ENCODE measurements at regions of chr14 and their contacts with region 1.

Region 1: GRCh38 chr14:99718031-99718810 is 34.1 kb downstream of the CYP46A1 start:
- DNase-seq: no peak
- H3K4me3 ChIP-seq: no peak overlapping the region
- H3K27ac ChIP-seq: no peak overlapping the region
- H3K27me3 ChIP-seq: no peaks in the 10 kb centered on the region
- CTCF ChIP-seq: no peak

Region 2: DNA sequence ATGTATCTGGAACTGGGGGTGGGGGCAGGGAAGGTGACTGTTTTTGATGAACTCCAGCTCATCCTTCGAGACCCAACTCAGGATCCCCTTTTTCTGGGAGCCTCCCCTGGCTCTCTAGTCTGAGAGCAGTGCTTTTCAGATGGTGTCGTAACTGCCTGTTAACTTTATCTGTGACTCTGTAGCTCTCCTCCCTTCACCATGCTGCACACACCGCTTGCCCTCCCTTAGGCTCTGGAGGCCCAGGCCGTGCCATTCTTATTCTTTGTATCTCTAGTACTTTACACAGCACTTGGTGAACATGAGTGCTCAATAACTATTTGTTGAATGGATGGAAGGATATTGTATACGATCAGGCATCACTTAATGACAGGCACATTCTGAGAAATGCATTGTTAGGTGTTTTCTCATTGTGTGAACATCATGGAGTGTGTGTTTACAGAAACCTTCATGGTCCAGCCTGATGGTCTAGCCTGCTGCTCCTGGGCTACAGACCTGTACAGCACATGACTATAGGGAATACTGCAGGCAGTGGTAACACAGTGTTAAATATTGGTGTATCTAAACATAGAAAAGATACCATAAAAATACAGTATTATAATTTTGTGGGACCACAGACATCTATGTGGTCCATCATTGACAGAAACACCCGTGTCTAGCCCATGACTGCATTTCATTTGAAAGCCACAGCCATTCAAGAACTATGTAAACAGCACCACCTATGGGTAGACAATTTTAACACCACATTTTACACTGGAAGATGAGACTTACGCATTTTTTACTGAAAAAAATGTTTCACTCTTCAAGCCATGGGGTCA is 166.8 kb after region 1 on chr14:
- in situ Hi-C with region 1: loop called (anchors 25 kb)
- DNase-seq: peak; percentile 46
- H3K4me3 ChIP-seq: no peak overlapping the region
- H3K27ac ChIP-seq: no peak overlapping the region
- H3K27me3 ChIP-seq: no peaks in the 10 kb centered on the region
- CTCF ChIP-seq: peak; percentile 64